ENCODE measurements at regions of chr20 and their contacts with region 1.

Region 1: GRCh38 chr20:2873010-2873746 is at the start of gene PTPRA:
- DNase-seq: peak; percentile 93 to 97 (median 95)
- H3K4me3 ChIP-seq: peak within 1 kb of the TSS; percentile 62 to 100 (median 94)
- H3K27ac ChIP-seq: peak within 1 kb of the TSS in 58 of 59 donors; percentile 43 to 95 (median 88)
- H3K27me3 ChIP-seq: no peaks in the 10 kb centered on the region
- CTCF ChIP-seq: peak in 8 of 56 donors; percentile 0 to 26 (median 7)
- total RNA-seq, gene PTPRA: 105 to 214 (median 150) TPM

Region 2: GRCh38 chr20:2825761-2826160 is 47.4 kb before region 1 on chr20:
- intact Hi-C with region 1: no loop called
- DNase-seq: no peak
- H3K4me3 ChIP-seq: no peak overlapping the region
- H3K27ac ChIP-seq: no peak overlapping the region
- H3K27me3 ChIP-seq: peaks cover 0 to 28% (median 14%) of the 10 kb centered on the region in 45 donors
- CTCF ChIP-seq: no peak

Region 3: GRCh38 chr20:2840138-2840966 is 32.8 kb before region 1 on chr20 and contains the starts of genes PCED1A and VPS16:
- intact Hi-C with region 1: loop called in 1 of 2 experiments (anchors 2 kb)
- DNase-seq: peak; percentile 84 to 97 (median 90)
- H3K4me3 ChIP-seq: peak within 1 kb of the TSS; percentile 70 to 99 (median 94)
- H3K27ac ChIP-seq: peak within 1 kb of the TSS; percentile 47 to 96 (median 89)
- H3K27me3 ChIP-seq: no peaks in the 10 kb centered on the region
- CTCF ChIP-seq: peak in 27 of 56 donors; percentile 7 to 58 (median 26)
- total RNA-seq, gene PCED1A: 27.4 to 60.4 (median 43.4) TPM
- total RNA-seq, gene VPS16: 39.8 to 69.6 (median 52.0) TPM

Region 4: DNA sequence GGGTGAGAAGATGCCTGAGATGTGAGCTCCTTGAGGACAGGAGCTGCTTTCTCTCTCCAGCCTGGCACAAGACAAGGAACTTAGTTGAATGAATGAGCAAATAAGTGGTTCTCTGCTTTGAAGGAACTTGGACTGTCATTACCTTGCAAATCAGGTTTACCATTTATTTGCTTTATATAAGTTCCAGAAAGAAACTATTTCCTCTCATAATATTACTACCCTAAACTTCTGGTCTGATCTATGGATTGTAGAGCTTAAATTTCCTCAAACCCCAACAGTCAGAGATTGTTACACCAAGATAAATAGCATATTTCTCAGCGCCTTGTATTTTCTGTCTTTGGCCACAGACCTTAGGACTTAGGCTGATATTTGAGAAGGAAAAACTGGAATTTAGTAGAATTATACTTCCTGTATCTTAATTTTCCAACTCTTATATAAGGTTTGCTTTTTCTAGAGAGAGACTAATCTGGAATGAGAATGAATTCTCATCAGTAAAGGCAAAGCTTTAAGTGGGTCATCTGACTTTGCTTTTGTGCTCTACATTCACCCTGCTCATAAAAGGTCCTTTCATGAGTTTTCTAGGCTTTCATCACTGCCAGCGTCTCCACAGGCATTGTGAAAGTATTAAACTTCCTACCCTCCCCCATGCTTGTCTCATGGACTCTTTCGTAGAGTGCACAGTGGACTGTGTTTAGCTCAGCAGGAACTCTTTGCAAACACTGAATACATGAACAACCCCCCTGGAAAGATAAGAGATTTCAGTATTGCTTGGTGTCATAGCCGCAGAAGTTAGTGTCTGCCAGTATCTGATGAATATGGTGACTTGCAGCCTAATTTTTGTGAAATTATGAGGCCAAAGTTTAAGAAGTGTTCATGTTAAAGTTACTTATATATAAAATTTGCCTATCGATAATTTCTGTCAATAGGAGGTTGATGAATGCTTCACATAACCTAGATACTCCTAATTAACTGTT is 74.1 kb after region 1 on chr20:
- intact Hi-C with region 1: loop called (anchors 2 to 10 kb)
- DNase-seq: peak in 5 of 10 donors; percentile 6 to 73 (median 48)
- H3K4me3 ChIP-seq: peak overlapping the region in 36 of 59 donors; percentile 0 to 54 (median 24)
- H3K27ac ChIP-seq: peak overlapping the region; percentile 21 to 99 (median 92)
- H3K27me3 ChIP-seq: no peaks in the 10 kb centered on the region
- CTCF ChIP-seq: peak in 11 of 56 donors; percentile 10 to 40 (median 25)

Measured in dorsolateral prefrontal cortex (tissue), 120 donors.